GM12878 (cell line): ENCODE measurements at regions of chr14 and their contacts with region 1.

Region 1: DNA sequence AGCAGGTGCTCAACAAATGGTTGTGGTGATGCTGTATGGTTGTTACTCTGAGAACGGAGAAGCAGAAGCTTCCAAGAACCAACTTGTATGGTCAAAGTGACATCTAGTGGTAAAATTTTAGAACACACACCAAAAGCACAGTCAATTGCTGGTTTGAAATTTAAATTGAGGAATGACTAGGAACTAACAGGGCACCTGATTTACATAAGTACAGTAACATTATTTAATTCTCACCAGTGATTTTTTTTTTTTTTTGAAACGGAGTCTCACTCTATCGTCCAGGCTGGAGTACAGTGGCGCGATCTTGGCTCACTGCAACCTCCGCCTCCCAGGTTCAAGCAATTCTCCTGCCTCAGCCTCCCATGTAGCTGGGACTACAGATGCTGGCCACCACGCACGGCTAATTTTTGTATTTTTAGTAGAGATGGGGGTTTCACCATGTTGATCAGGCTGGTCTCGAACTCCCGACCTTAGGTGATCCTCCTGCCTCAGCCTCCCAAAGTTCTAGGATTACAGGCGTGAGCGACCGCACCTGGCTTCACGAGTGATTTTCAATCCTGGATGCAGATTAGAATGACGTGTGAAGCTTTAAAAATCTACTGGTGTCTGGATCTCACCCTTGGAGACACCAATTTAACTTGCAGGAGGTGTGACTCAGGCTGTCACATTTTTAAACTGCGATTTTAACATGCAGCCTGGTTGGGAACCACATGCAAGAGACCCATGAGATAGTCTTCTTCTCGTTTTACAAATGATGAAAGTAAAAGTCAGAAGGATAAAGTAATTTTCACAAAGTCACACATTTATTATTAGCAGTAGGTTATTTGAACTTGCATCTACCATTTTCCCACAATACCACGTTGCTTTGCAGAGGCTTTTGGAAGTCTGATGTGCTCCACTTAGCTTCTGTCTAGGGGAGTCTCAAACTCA is 14.1 kb upstream of the NUMB start:
- DNase-seq: peak; percentile 57
- ATAC-seq: peak; percentile 86
- H3K4me3 ChIP-seq: no peak overlapping the region
- H3K27ac ChIP-seq: peak overlapping the region; percentile 29; the same call in 1 of the 2 replicates
- H3K4me1 ChIP-seq: peaks cover 15% of the 10 kb centered on the region
- H3K27me3 ChIP-seq: no peaks in the 10 kb centered on the region
- CTCF ChIP-seq: peak; percentile 56 to 82 (median 65); a peak in 5 of 6 replicates
- EP300 ChIP-seq: peak in 1 of 2 experiments; percentile 39; a peak in 1 of 4 replicates
- POLR2A ChIP-seq: no peak
- RAD21 ChIP-seq: peak; percentile 99

Region 2: GRCh38 chr14:73173092-73173735 is 299.2 kb before region 1 on chr14:
- CTCF ChIA-PET with region 1: interaction called, 106 read pairs
- POLR2A ChIA-PET with region 1: interaction called, 6 read pairs
- RAD21 ChIA-PET with region 1: interaction called, 48 read pairs
- SMC1A ChIA-PET with region 1: interaction called, 37 read pairs
- in situ Hi-C with region 1: loop called (anchors 5 kb)
- intact Hi-C with region 1: loop called (anchors 1 kb)
- DNase-seq: no peak
- ATAC-seq: peak; percentile 60
- H3K4me3 ChIP-seq: no peak overlapping the region
- H3K27ac ChIP-seq: no peak overlapping the region
- H3K4me1 ChIP-seq: no peaks in the 10 kb centered on the region
- H3K27me3 ChIP-seq: no peaks in the 10 kb centered on the region
- CTCF ChIP-seq: peak; percentile 19 to 62 (median 36); a peak in 4 of 6 replicates
- EP300 ChIP-seq: no peak
- POLR2A ChIP-seq: no peak
- RAD21 ChIP-seq: peak; percentile 68

Region 3: DNA sequence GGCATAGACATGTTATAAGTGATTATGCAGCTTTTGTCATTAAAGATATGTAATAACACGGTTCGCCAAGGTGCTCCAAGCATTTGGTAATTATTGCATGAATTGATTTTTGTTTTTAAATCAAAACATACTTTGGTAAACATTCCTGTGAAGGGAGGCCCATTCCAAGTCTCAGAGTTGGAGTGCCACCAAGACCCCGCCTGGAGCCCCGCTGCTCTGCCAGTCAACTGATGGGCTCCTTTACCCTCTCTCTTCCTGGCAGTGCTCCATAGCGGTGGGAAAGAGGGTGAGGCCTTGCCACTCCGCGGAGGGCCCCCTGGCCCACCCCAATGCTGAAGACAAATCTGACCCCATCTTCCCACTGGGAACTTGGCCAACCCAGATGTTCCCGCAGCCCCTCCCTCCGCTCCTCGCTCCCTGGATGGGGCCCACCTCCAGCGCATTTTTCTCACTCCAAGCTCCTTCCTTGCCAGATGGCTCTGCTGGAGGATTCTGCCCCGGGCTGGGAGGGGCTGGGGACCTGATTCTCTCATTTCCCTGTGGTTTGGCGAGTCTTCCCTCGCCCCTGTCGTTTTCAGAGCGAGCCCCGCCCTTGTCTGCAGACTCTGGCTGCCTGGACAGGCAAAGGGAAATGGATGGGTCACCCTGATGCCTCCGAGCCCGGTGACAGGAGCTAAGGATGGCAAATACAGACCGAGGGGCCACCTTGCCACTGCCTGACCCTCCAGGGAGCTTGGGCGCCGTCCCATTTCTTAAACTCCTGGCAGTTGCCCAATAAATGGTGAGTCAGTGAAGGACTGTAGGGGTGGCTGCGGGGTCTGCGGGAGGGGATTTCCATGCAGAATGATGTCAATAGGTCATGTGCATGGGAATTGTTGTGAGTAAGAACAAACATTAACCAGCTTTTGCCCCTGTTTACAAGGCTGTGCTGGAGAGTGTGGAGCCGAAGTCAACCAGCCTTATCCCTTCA is 244.4 kb before region 1 on chr14:
- CTCF ChIA-PET with region 1: interaction called, 75 read pairs
- POLR2A ChIA-PET with region 1: interaction called, 5 read pairs
- RAD21 ChIA-PET with region 1: interaction called, 55 read pairs
- SMC1A ChIA-PET with region 1: interaction called, 75 read pairs
- in situ Hi-C with region 1: no loop called
- intact Hi-C with region 1: loop called (anchors 5 kb)
- DNase-seq: no peak
- ATAC-seq: peak; percentile 24
- H3K4me3 ChIP-seq: no peak overlapping the region
- H3K27ac ChIP-seq: no peak overlapping the region
- H3K4me1 ChIP-seq: peaks cover 8% of the 10 kb centered on the region
- H3K27me3 ChIP-seq: no peaks in the 10 kb centered on the region
- CTCF ChIP-seq: no peak
- EP300 ChIP-seq: no peak
- POLR2A ChIP-seq: no peak
- RAD21 ChIP-seq: no peak

Region 4: DNA sequence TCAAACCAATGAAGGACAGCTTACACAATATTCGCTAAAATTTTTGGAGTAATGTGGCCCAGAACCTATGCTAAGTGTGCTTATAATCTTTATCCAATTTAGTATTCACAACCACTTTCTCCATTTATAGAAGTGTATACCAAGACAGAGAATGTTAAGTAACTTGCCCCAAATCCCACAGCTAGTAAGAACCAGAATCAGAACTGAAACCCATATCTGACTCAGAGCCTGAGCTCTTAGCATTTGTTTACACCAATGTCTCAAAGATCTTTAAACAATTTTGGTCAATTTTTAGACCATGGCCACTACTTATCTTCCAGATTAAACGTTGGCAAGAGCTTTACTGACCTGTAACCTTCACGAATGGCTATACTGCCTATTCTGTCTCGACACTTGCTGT is 182.2 kb before region 1 on chr14:
- CTCF ChIA-PET with region 1: interaction called, 252 read pairs
- POLR2A ChIA-PET with region 1: interaction called, 23 read pairs
- RAD21 ChIA-PET with region 1: interaction called, 591 read pairs
- SMC1A ChIA-PET with region 1: interaction called, 311 read pairs
- in situ Hi-C with region 1: loop called (anchors 5 kb)
- intact Hi-C with region 1: loop called (anchors 1 kb)
- DNase-seq: peak; percentile 64
- ATAC-seq: peak; percentile 79
- H3K4me3 ChIP-seq: peak overlapping the region; percentile 22; the same call in 1 of the 2 replicates
- H3K27ac ChIP-seq: peak overlapping the region; percentile 55; the same call in 1 of the 2 replicates
- H3K4me1 ChIP-seq: peaks cover 35% of the 10 kb centered on the region
- H3K27me3 ChIP-seq: no peaks in the 10 kb centered on the region
- CTCF ChIP-seq: no peak
- EP300 ChIP-seq: peak; percentile 32 to 89; a peak in 3 of 4 replicates
- POLR2A ChIP-seq: no peak
- RAD21 ChIP-seq: no peak

Region 5: GRCh38 chr14:73403181-73403752 is 69.2 kb before region 1 on chr14:
- CTCF ChIA-PET with region 1: interaction called, 8 read pairs
- POLR2A ChIA-PET with region 1: interaction called, 5 read pairs
- RAD21 ChIA-PET with region 1: interaction called, 64 read pairs
- SMC1A ChIA-PET with region 1: interaction called, 109 read pairs
- in situ Hi-C with region 1: no loop called
- intact Hi-C with region 1: no loop called
- DNase-seq: no peak
- ATAC-seq: peak; percentile 23
- H3K4me3 ChIP-seq: no peak overlapping the region
- H3K27ac ChIP-seq: peak overlapping the region; percentile 45
- H3K4me1 ChIP-seq: peaks cover 28% of the 10 kb centered on the region
- H3K27me3 ChIP-seq: no peaks in the 10 kb centered on the region
- CTCF ChIP-seq: no peak
- EP300 ChIP-seq: no peak
- POLR2A ChIP-seq: no peak
- RAD21 ChIP-seq: no peak

Region 6: GRCh38 chr14:73458151-73458976 is 14.1 kb before region 1 on chr14 and contains the start of gene NUMB:
- CTCF ChIA-PET with region 1: interaction called, 21 read pairs
- POLR2A ChIA-PET with region 1: interaction called, 42 read pairs
- RAD21 ChIA-PET with region 1: interaction called, 18 read pairs
- SMC1A ChIA-PET with region 1: interaction called, 78 read pairs
- in situ Hi-C with region 1: no loop called
- intact Hi-C with region 1: no loop called
- DNase-seq: peak; percentile 100
- ATAC-seq: peak; percentile 94
- H3K4me3 ChIP-seq: peak within 1 kb of the TSS; percentile 97
- H3K27ac ChIP-seq: peak within 1 kb of the TSS; percentile 71
- H3K4me1 ChIP-seq: peaks cover 4% of the 10 kb centered on the region; the same call in 1 of the 2 replicates
- H3K27me3 ChIP-seq: no peaks in the 10 kb centered on the region
- CTCF ChIP-seq: 0 out of 6 replicates have a peak, but pooled peaks of 1 of the 3 experiments have one; percentile 7
- EP300 ChIP-seq: no peak
- POLR2A ChIP-seq: peak; percentile 94
- RAD21 ChIP-seq: no peak
- polyA plus RNA-seq, gene NUMB: 29.8 to 30.9 TPM

Region 7: DNA sequence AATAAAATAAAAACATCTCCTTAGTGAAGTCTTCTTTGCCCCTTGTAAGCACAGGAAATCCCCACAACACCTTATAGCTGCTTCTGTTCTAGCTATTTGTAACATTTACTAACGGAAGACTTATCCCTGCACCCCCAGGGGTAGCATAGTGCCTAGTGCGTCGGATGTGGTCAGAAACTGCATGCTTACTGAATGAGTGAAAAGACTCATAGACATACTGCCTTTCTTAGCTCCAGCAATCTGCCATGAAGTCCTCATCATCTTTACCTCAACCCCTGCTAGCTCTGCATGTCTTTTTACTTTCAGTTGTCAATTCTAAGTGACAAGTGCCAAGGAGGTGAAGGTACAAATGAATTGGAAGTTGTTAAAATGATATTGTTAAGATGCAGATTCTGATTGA is 31.2 kb after region 1 on chr14:
- CTCF ChIA-PET with region 1: interaction called, 14 read pairs
- POLR2A ChIA-PET with region 1: interaction called, 4 read pairs
- RAD21 ChIA-PET with region 1: interaction called, 22 read pairs
- SMC1A ChIA-PET with region 1: interaction called, 22 read pairs
- in situ Hi-C with region 1: no loop called
- intact Hi-C with region 1: no loop called
- DNase-seq: peak; percentile 27
- ATAC-seq: peak; percentile 59
- H3K4me3 ChIP-seq: no peak overlapping the region
- H3K27ac ChIP-seq: no peak overlapping the region
- H3K4me1 ChIP-seq: peaks cover 5% of the 10 kb centered on the region
- H3K27me3 ChIP-seq: no peaks in the 10 kb centered on the region
- CTCF ChIP-seq: no peak
- EP300 ChIP-seq: no peak
- POLR2A ChIP-seq: no peak
- RAD21 ChIP-seq: no peak

Region 8: GRCh38 chr14:73627151-73627558 is 154.7 kb after region 1 on chr14:
- CTCF ChIA-PET with region 1: no interaction called
- POLR2A ChIA-PET with region 1: no interaction called
- RAD21 ChIA-PET with region 1: no interaction called
- SMC1A ChIA-PET with region 1: no interaction called
- in situ Hi-C with region 1: no loop called
- intact Hi-C with region 1: no loop called
- DNase-seq: no peak
- ATAC-seq: no peak
- H3K4me3 ChIP-seq: no peak overlapping the region
- H3K27ac ChIP-seq: no peak overlapping the region
- H3K4me1 ChIP-seq: no peaks in the 10 kb centered on the region
- H3K27me3 ChIP-seq: no peaks in the 10 kb centered on the region
- CTCF ChIP-seq: no peak
- EP300 ChIP-seq: no peak
- POLR2A ChIP-seq: no peak
- RAD21 ChIP-seq: no peak